Right ventricle myocardium inferior (tissue), 1 donor: ENCODE measurements at regions of chr7 and their contacts with region 1.

Region 1: DNA sequence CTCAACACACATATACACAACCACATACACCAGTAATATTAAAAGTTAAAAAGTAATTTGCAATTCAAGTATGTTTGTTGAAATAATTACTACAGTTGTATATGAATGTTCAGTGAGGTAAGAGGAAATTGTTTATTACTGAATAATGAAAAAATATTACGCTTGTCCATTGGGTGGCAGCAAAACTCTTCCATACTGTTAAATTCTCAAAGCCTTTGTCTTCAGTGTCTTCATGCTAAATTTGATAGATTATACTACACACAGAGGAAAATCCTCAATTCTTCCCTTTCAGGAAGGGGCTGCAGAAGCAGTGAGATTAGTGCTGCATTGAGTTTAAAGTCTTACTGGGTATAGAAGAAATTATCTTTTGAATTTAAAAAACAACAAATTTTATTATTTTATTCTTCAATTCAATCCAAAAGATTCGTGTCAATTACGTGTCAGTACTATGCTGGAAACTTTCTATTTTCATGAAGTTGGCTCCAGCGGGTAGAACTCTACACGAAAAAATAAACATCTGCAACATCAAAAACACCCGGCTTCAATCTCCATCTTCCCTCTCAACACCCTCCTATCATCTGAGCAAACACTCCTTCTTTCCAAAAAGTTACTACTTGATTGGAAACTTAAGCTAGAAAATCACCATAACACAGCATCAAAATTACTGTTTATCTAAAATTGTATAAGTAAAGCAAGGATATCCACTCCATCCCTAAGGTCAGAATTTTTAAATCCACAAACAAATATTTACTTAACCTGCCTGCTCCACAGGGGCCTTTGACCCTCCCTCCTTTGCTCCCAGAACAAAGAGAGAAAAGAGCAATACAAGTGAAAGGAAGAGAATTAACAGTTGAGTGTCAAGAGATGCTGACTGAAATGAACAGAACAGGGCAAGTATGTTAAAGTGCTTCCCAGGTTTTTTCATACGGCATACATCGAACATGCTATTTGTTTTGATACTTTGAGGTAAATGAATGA is 37.0 kb upstream of the TES start:
- DNase-seq: no peak
- ATAC-seq: no peak

Region 2: DNA sequence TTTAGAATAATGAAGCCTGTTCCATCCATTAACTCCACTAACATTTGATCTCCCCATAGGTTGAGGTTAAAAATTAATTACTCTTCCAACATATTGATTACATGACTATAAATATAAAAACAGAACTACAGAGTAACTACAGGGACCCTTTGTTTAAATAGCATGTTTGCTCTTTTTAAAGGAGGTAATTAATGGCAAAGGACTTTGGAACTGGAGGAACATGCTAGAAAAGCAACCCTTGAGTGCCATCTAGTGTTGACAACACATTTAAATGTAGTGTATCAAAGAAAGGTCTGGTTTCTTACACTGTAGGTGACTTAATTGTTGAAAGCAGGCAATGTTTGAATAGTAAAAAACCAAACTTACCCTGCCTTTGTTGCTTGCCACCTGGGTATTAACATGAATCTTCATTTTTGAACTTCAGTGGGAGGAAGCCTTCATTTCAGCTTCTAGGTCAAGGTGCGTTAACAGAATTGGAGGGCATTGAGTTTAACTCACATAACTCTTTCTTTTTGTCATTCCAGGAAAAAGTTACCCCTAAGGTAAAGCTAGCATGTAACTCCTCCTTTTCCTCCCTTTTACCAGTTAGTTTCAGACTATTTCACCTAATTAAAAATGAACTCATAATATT is 636.4 kb after region 1 on chr7:
- intact Hi-C with region 1: loop called (anchors 5 kb)
- DNase-seq: no peak
- ATAC-seq: peak; percentile 52

Region 3: DNA sequence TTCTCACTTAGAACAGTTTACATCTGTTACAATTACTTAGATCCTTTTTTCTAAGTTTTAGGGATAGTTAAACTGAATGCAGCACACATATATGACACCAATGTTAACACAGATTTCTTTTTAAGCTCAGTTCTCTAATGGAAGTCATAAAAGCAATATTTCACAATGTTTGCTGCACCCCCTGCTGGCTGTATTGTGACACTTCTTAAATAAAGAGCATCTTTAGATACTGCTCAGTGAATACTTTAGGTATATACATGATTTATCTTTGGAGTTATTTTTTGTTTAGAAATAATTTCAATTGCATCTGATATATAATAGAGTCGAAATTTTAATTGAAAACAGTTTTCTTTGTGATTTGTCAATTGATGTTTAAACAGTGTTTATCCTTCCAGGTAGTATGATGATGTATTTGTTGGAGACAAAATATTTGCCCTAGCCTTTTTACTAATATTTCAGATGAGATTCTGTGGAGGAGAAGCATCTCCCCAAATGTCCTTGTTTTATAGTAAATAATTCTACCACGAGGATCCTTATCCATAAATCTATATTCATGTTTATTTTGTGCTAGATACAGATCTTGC is 954.3 kb after region 1 on chr7:
- intact Hi-C with region 1: loop called (anchors 10 kb)
- DNase-seq: no peak
- ATAC-seq: no peak